ENCODE measurements at regions of chr4 and their contacts with region 1.

Region 1: DNA sequence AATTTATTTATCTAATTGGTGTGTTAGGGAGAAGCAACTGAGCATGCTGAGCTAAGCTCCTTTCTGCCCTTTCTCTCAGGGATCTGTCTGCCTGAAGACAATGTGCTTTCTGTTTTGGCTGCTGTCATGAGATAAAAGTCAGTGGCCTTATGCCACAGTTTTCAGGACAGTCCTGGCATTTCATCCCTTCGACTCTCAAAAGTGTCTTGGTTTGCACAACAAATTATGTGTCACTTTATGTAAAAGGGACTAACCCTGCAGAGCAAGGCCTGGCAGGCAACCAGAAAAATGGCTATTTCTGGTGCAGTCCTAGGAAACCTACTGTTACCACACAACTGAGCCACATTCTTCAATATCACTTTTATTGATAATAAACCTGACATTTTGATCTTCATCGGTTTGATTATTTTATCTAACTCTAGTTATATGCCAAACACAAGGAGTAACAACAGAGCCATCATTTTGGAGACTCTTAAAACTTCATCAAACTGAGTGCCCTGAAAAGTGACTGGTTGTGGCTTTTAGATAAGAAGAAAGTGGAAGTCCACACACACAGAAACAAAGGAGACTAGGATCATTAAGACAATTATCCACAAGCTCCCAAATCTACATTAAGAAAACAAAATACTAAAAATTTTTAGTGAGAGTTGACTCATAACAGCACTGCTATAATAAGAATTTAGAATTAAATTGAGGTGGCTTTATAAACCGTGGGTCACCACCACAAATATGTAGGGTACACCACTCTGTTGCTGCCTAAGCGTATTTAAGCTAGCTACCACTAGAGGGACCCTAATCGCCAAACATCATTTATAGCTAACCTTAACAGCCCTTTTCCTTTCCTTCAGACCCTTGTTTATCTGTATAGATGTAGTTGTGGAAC is 95.9 kb upstream of the PTPN13 start:
- DNase-seq: peak in 1 of 2 donors; percentile 17
- ATAC-seq: peak; percentile 48 to 56
- H3K4me3 ChIP-seq: no peak overlapping the region
- H3K27ac ChIP-seq: peak overlapping the region in 1 of 4 donors; percentile 54
- H3K4me1 ChIP-seq: peaks cover 8 to 14% of the 10 kb centered on the region in 2 donors
- H3K27me3 ChIP-seq: no peaks in the 10 kb centered on the region
- CTCF ChIP-seq: peak; percentile 45 to 71 (median 51)
- POLR2A ChIP-seq: no peak

Region 2: GRCh38 chr4:86564795-86565194 is 66.6 kb after region 1 on chr4:
- in situ Hi-C with region 1: no loop called
- intact Hi-C with region 1: no loop called
- DNase-seq: no peak
- ATAC-seq: no peak
- H3K4me3 ChIP-seq: no peak overlapping the region
- H3K27ac ChIP-seq: no peak overlapping the region
- H3K4me1 ChIP-seq: no peaks in the 10 kb centered on the region
- H3K27me3 ChIP-seq: no peaks in the 10 kb centered on the region
- CTCF ChIP-seq: no peak
- POLR2A ChIP-seq: no peak

Region 3: DNA sequence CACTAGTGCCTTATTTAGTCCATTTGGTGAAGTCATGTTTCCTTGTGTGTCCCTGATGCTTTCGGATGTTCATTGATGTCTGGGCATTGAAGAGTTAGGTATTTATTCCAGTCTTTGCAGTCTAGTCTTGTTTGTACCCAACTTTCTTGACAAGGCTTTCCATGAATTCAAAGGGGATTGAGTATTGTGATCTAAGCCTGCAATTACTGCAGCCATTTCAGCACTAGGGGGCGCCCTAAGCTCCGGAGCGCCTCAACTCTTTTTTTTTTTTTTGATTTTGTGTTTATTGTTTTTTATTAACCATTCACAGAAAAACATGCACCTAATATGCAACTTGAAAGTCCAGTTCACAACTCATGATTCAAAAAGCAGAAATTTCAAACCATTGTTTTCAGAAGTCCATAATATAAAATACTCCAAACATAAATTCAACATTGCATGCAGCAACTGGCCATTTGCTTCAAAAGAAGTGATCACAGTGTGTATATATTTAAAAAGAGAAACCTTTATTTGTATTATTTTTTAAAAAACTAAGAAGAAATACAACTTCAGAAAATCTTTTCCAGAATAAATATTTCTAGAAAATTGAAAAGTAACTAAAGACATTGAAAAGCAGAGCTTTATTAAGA is 155.1 kb after region 1 on chr4:
- in situ Hi-C with region 1: no loop called
- intact Hi-C with region 1: no loop called
- DNase-seq: no peak
- ATAC-seq: no peak
- H3K4me3 ChIP-seq: no peak overlapping the region
- H3K27ac ChIP-seq: no peak overlapping the region
- H3K4me1 ChIP-seq: no peaks in the 10 kb centered on the region
- H3K27me3 ChIP-seq: no peaks in the 10 kb centered on the region
- CTCF ChIP-seq: peak in 1 of 5 experiments; percentile 22
- POLR2A ChIP-seq: no peak

Region 4: GRCh38 chr4:86895692-86896488 is 397.7 kb after region 1 on chr4:
- in situ Hi-C with region 1: loop called (anchors 5 kb)
- intact Hi-C with region 1: loop called (anchors 1 kb)
- DNase-seq: no peak
- ATAC-seq: peak in 1 of 2 donors; percentile 64
- H3K4me3 ChIP-seq: no peak overlapping the region
- H3K27ac ChIP-seq: peak overlapping the region in 3 of 4 donors; percentile 22 to 47 (median 30)
- H3K4me1 ChIP-seq: peaks cover 7 to 8% of the 10 kb centered on the region in 2 donors
- H3K27me3 ChIP-seq: no peaks in the 10 kb centered on the region
- CTCF ChIP-seq: peak; percentile 43 to 76 (median 66)
- POLR2A ChIP-seq: no peak

Region 5: DNA sequence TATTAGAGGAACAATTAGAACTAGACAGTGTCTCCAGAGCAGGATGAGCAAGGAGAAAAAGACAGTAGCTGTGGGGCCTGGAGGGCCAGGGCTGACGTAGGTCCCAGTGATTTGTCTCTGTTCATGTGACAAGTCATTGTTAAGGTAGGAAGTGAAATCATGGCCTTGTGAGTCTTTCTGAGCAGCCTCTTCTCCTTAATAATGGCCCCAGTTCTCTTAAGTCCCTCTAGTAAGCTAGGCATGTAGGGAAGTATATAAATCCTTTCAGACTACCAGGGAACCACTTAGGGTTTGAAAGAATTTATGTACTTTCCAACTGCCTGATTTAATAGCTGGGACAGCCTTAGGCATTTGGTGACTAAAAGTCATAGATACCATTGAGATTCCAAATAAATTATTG is 589.2 kb after region 1 on chr4:
- in situ Hi-C with region 1: no loop called
- intact Hi-C with region 1: loop called (anchors 5 kb)
- DNase-seq: no peak
- ATAC-seq: no peak
- H3K4me3 ChIP-seq: no peak overlapping the region
- H3K27ac ChIP-seq: peak overlapping the region; percentile 80 to 91 (median 84)
- H3K4me1 ChIP-seq: peaks cover 65 to 69% of the 10 kb centered on the region in 2 donors
- H3K27me3 ChIP-seq: no peaks in the 10 kb centered on the region
- CTCF ChIP-seq: no peak
- POLR2A ChIP-seq: no peak